ENCODE measurements at regions of chr21 and their contacts with region 1.

Region 1: GRCh38 chr21:45140346-45140940 is 66.1 kb downstream of the ADARB1 start:
- DNase-seq: peak; percentile 86 to 91
- H3K4me3 ChIP-seq: no peak overlapping the region
- H3K4me3 Mint-ChIP-seq: no peak overlapping the region
- H3K27ac Mint-ChIP-seq: no peak overlapping the region
- H3K4me1 ChIP-seq: peaks cover 10% of the 10 kb centered on the region
- H3K4me1 Mint-ChIP-seq: no peaks in the 10 kb centered on the region
- H3K27me3 ChIP-seq: no peaks in the 10 kb centered on the region
- H3K27me3 Mint-ChIP-seq: no peaks in the 10 kb centered on the region
- CTCF ChIP-seq: peak; percentile 78 to 91

Region 2: GRCh38 chr21:45011911-45012660 is 128.4 kb before region 1 on chr21:
- CTCF ChIA-PET with region 1: interaction called, 24 read pairs
- POLR2A ChIA-PET with region 1: no interaction called
- intact Hi-C with region 1: no loop called
- DNase-seq: peak; percentile 94 to 97
- H3K4me3 ChIP-seq: peak overlapping the region; percentile 4
- H3K4me3 Mint-ChIP-seq: peak overlapping the region; percentile 67
- H3K27ac Mint-ChIP-seq: peak overlapping the region; percentile 82
- H3K4me1 ChIP-seq: peaks cover 61% of the 10 kb centered on the region
- H3K4me1 Mint-ChIP-seq: peaks cover 34% of the 10 kb centered on the region
- H3K27me3 ChIP-seq: no peaks in the 10 kb centered on the region
- H3K27me3 Mint-ChIP-seq: no peaks in the 10 kb centered on the region
- CTCF ChIP-seq: peak in 1 of 2 experiments; percentile 62

Region 3: DNA sequence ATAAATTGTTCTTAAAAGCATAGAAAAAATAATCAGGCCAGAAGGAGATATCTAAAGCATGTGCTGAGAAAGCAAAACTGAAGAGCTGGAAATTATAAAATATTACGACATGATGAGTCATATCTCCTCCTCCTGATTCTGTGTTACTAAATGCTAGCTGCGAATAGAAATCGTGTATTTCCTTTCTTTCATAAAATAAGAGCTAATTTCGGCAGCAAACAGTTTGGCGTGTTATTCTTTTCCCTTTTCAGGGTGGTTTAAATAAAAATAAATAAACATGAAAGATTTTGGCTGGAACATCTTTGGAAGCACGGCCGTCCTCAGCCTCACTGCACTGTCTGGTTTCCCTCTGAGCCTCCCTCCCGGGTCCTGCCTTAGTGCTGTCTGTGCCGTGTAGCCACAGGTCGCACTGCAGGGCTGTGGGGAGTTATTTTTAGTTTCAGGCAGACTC is 10.1 kb before region 1 on chr21:
- CTCF ChIA-PET with region 1: interaction called, 18 read pairs
- POLR2A ChIA-PET with region 1: no interaction called
- intact Hi-C with region 1: no loop called
- DNase-seq: no peak
- H3K4me3 ChIP-seq: no peak overlapping the region
- H3K4me3 Mint-ChIP-seq: no peak overlapping the region
- H3K27ac Mint-ChIP-seq: no peak overlapping the region
- H3K4me1 ChIP-seq: no peaks in the 10 kb centered on the region
- H3K4me1 Mint-ChIP-seq: no peaks in the 10 kb centered on the region
- H3K27me3 ChIP-seq: no peaks in the 10 kb centered on the region
- H3K27me3 Mint-ChIP-seq: no peaks in the 10 kb centered on the region
- CTCF ChIP-seq: no peak

Region 4: DNA sequence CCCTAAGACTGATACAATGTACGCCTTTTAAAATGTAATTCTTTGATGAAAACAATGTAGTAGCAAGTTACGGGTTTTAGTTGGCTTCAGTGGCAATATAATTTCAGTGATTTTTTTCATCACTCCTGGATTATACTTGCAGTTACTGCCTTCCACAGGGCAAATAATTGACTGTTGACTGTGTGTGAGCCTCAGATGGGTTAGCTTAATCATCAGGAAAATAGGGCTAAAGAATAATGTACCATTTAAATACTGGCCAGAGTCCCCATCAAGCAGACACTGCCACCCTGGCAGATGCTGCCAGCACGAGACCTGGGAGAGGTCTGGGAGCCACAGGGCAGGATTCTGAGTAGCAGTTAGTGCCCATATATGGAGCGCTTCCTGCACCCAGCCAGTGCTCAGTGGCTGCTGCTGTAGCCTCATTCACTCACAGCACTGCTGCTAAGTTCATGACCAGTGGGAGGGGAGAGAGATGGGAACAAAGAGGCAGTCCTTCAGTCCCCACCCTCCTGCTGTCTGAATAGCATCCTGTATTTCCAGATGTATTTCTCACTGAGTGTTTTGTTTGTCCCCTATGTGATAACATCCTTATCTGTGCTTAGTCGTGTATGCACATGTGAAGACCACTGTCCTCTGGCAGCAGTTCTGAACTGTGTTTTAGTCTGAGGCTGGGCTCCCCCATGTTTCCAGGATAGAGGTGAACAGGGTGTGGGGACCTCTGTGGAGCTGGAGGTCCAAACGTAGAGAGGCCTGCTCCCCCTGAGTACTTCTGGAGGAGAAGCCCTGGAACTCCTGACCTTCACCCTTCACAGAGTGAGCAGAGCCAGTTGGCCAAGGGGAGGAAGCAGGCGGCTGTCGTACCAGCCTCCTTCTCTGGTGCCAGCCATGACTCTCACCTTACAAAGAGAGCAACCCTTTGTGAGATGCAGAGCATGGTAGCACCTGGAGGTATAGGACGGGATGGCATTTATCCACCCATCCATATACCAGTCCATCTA is 14.4 kb after region 1 on chr21:
- CTCF ChIA-PET with region 1: no interaction called
- POLR2A ChIA-PET with region 1: no interaction called
- intact Hi-C with region 1: no loop called
- DNase-seq: no peak
- H3K4me3 ChIP-seq: no peak overlapping the region
- H3K4me3 Mint-ChIP-seq: no peak overlapping the region
- H3K27ac Mint-ChIP-seq: no peak overlapping the region
- H3K4me1 ChIP-seq: no peaks in the 10 kb centered on the region
- H3K4me1 Mint-ChIP-seq: no peaks in the 10 kb centered on the region
- H3K27me3 ChIP-seq: no peaks in the 10 kb centered on the region
- H3K27me3 Mint-ChIP-seq: no peaks in the 10 kb centered on the region
- CTCF ChIP-seq: no peak

Region 5: GRCh38 chr21:45270306-45270821 is 129.9 kb after region 1 on chr21:
- CTCF ChIA-PET with region 1: interaction called, 12 read pairs
- POLR2A ChIA-PET with region 1: no interaction called
- intact Hi-C with region 1: no loop called
- DNase-seq: peak in 1 of 2 experiments; percentile 48
- H3K4me3 ChIP-seq: no peak overlapping the region
- H3K4me3 Mint-ChIP-seq: no peak overlapping the region
- H3K27ac Mint-ChIP-seq: no peak overlapping the region
- H3K4me1 ChIP-seq: no peaks in the 10 kb centered on the region
- H3K4me1 Mint-ChIP-seq: no peaks in the 10 kb centered on the region
- H3K27me3 ChIP-seq: no peaks in the 10 kb centered on the region
- H3K27me3 Mint-ChIP-seq: no peaks in the 10 kb centered on the region
- CTCF ChIP-seq: peak; percentile 23 to 43

Region 6: DNA sequence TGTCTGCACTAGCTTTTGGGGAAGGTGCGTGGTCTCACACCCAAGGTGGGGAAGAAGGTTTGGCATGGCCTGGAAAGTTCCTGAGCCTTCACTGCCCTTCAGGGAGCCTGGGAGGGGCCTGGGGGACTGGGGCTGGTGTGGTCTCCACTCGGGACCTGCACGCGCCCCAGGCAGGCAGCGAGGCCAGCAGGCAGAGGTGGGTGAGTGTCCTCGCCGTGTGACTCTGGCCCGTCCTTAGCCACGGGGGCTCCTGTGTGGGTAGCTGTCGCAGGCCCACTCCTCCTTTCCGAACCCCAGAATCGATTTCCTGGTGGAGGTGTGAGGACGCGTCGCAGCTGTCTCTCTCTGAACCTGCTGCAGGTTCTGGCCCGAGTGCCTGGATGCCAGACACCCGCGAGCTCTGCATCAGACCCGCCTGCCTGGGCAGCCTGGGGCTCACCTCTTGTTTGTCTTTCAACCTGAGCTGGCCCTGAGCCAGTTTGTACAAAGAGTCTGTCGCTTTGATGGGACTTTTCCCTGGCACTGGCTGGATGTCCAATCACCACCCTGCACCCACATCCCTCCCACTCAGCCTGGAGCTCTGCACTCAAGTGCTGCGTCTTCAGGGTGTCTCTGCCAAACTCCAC is 437.8 kb after region 1 on chr21:
- CTCF ChIA-PET with region 1: no interaction called
- POLR2A ChIA-PET with region 1: no interaction called
- intact Hi-C with region 1: no loop called
- DNase-seq: peak in 1 of 2 experiments; percentile 33
- H3K4me3 ChIP-seq: no peak overlapping the region
- H3K4me3 Mint-ChIP-seq: no peak overlapping the region
- H3K27ac Mint-ChIP-seq: no peak overlapping the region
- H3K4me1 ChIP-seq: no peaks in the 10 kb centered on the region
- H3K4me1 Mint-ChIP-seq: no peaks in the 10 kb centered on the region
- H3K27me3 ChIP-seq: no peaks in the 10 kb centered on the region
- H3K27me3 Mint-ChIP-seq: peaks cover 6% of the 10 kb centered on the region
- CTCF ChIP-seq: no peak

Region 7: DNA sequence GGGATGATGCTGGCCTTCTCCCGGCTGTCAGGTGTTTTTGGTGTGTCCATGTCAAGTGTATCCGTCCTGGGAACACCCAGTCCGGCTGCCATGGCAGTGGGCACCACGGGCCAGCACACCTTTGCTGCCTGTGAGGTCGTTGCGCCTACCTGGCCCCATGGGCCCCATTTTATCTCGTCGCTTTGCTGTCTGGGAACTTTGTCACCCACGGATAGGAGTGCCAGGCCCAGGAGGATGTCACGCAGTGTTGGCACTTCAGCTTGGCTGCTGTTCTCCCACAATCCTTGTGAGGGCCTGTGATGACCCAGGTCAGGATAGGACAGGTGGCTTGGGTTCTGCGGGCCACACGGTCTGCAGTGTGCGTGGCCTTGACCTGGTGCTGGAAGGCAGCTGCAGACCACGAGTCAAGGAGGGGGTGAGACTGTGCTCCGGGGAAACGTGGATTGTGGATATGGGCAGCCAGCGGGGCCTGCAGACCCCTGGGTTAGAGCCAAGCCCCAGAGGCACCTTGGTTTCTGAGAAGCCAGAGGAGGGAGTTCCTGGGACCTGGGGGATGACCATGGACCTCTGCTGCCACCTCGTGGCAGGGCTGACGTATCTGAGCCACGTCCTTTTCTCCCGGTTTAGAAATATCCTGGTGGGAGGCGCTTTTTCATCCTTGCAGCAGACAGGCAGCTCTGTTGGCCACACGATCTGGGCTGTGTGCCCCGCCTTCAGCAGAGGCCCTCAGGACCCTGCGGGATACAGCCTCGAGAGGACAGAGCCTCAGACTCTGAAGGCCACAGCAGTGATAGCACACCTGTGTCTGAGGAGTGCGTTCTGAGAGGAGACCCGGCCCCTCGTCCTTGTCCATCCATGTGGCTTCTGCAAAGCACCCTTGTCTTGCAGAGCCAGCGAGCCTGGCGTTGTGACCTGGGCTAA is 680.0 kb after region 1 on chr21:
- CTCF ChIA-PET with region 1: interaction called, 4 read pairs
- POLR2A ChIA-PET with region 1: no interaction called
- intact Hi-C with region 1: loop called (anchors 5 kb)
- DNase-seq: peak; percentile 82
- H3K4me3 ChIP-seq: no peak overlapping the region
- H3K4me3 Mint-ChIP-seq: no peak overlapping the region
- H3K27ac Mint-ChIP-seq: no peak overlapping the region
- H3K4me1 ChIP-seq: peaks cover 5% of the 10 kb centered on the region; the same call in 1 of the 2 replicates
- H3K4me1 Mint-ChIP-seq: peaks cover 9% of the 10 kb centered on the region
- H3K27me3 ChIP-seq: no peaks in the 10 kb centered on the region
- H3K27me3 Mint-ChIP-seq: peaks cover 24% of the 10 kb centered on the region
- CTCF ChIP-seq: peak; percentile 82 to 84